ENCODE measurements at regions of chr6 and their contacts with region 1.

Region 1: GRCh38 chr6:35731736-35732532 is 4.9 kb upstream of the ARMC12 start:
- DNase-seq: peak; percentile 98
- H3K4me3 Mint-ChIP-seq: peak overlapping the region; percentile 90
- H3K27ac Mint-ChIP-seq: peak overlapping the region; percentile 94
- H3K4me1 Mint-ChIP-seq: peaks cover 56% of the 10 kb centered on the region
- H3K27me3 Mint-ChIP-seq: no peaks in the 10 kb centered on the region

Region 2: GRCh38 chr6:35642471-35643161 is 89.3 kb before region 1 on chr6:
- intact Hi-C with region 1: no loop called
- DNase-seq: peak; percentile 52
- H3K4me3 Mint-ChIP-seq: no peak overlapping the region
- H3K27ac Mint-ChIP-seq: no peak overlapping the region
- H3K4me1 Mint-ChIP-seq: peaks cover 39% of the 10 kb centered on the region
- H3K27me3 Mint-ChIP-seq: no peaks in the 10 kb centered on the region

Region 3: GRCh38 chr6:35688581-35689322 is 43.2 kb before region 1 on chr6 and contains the start of gene FKBP5:
- intact Hi-C with region 1: loop called (anchors 1 kb)
- DNase-seq: peak; percentile 97
- H3K4me3 Mint-ChIP-seq: peak within 1 kb of the TSS; percentile 93
- H3K27ac Mint-ChIP-seq: peak within 1 kb of the TSS; percentile 92
- H3K4me1 Mint-ChIP-seq: peaks cover 15% of the 10 kb centered on the region
- H3K27me3 Mint-ChIP-seq: no peaks in the 10 kb centered on the region
- total RNA-seq, gene FKBP5: 85.0 and 85.1 TPM in 2 replicates